Activated CD4-positive, alpha-beta memory T cell treated with anti-CD3 and anti-CD28 coated beads for 36 hours (primary cell): ENCODE measurements at regions of chr7 and their contacts with region 1.

Region 1: GRCh38 chr7:74026903-74027551 is 946 bp upstream of the ELN start:
- DNase-seq: peak; percentile 73
- H3K4me3 Mint-ChIP-seq: no peak overlapping the region
- H3K27ac Mint-ChIP-seq: no peak overlapping the region
- H3K4me1 Mint-ChIP-seq: peaks cover 6% of the 10 kb centered on the region
- H3K27me3 Mint-ChIP-seq: peaks cover 50% of the 10 kb centered on the region

Region 2: DNA sequence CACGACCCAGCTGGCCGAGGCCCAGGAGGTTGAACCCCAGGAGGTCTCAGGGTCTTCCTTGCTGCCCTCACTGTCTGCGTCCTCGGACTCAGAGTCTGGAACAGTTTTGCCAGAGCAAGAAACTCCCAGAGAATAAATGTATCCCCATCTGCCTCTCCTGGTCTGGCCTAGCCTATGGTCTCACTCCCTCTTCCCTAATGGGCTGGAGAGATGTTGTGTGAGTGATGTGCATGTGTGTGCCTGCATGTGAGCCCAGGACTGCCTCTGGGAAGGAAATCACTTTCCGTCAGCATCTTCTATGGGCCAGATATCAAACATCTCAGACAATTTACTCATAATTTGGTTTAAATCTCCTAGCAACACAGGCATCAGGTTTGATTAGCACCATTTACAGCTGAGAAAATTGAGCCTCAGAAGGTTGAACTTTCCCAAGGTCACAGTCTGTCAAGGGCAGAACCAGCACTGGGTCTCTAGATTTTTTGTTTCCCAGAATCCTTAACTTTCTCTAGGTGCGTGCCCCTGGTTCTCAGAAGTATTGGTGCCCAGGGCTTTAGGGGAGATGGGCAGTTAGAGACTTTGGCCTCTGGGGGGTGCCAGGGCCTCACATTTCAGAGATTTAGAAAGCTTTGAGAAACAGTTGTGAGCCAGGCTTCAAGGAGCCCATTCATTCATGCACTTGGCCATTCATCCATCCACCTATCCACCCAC is 161.1 kb before region 1 on chr7:
- CTCF ChIA-PET with region 1: interaction called, 5 read pairs
- POLR2A ChIA-PET with region 1: no interaction called
- intact Hi-C with region 1: loop called (anchors 1 kb)
- DNase-seq: peak; percentile 38
- H3K4me3 Mint-ChIP-seq: no peak overlapping the region
- H3K27ac Mint-ChIP-seq: no peak overlapping the region
- H3K4me1 Mint-ChIP-seq: no peaks in the 10 kb centered on the region
- H3K27me3 Mint-ChIP-seq: no peaks in the 10 kb centered on the region

Region 3: DNA sequence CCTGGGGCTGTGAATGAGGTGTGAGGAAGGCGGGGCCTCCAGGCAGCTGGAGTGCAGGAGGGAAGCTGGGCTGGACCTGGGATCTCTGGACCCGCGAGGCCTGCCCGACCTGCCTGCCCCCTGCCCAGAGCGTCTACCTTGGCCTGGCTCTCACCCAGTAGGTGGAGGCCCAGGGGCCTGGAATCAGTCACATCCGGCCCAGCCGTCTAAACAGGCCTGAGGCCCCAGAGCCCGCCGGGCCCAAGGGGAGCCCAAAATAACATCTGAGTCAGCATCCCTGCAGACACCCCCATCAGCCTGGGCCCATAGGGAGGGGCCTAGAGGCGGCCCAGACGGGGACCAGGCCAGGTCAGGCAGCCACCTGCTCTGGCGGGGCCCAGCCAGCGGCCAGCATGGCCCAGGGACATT is 14.2 kb before region 1 on chr7:
- CTCF ChIA-PET with region 1: interaction called, 19 read pairs
- POLR2A ChIA-PET with region 1: no interaction called
- intact Hi-C with region 1: no loop called
- DNase-seq: no peak
- H3K4me3 Mint-ChIP-seq: no peak overlapping the region
- H3K27ac Mint-ChIP-seq: no peak overlapping the region
- H3K4me1 Mint-ChIP-seq: no peaks in the 10 kb centered on the region
- H3K27me3 Mint-ChIP-seq: peaks cover 2% of the 10 kb centered on the region